ENCODE measurements at regions of chr22 and their contacts with region 1.

Region 1: DNA sequence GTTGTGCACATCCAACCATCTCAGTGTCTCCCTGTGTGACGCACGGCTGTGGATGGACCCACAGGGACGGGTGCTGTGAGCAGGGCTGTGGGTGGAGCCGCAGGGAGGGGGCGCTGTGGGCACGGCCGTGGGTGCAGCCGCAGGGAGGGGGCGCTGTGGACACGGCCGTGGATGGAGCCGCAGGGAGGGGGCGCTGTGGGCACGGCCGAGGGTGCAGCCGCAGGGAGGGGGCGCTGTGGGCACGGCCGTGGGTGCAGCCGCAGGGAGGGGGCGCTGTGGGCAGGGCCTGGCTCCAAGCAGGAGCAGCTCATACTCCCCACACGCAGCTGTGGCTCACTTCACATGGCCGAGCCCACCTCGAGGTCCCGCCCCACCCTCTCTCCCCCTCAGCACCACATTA is 6.0 kb upstream of the MAPK11 start:
- DNase-seq: peak; percentile 90 to 94 (median 93)
- H3K4me3 ChIP-seq: no peak overlapping the region
- H3K27ac ChIP-seq: no peak overlapping the region
- H3K4me1 ChIP-seq: peaks cover 0 to 16% (median 11%) of the 10 kb centered on the region in 4 experiments
- H3K27me3 ChIP-seq: peaks cover 0 to 7% (median 1%) of the 10 kb centered on the region in 5 experiments

Region 2: GRCh38 chr22:50250555-50251476 is 25.3 kb before region 1 on chr22 and contains the start of gene HDAC10:
- CTCF ChIA-PET with region 1: interaction called, 22 read pairs
- POLR2A ChIA-PET with region 1: interaction called, 5 read pairs
- DNase-seq: peak; percentile 77 to 83 (median 81)
- H3K4me3 ChIP-seq: peak within 1 kb of the TSS; percentile 38 to 90 (median 76)
- H3K27ac ChIP-seq: peak within 1 kb of the TSS in 1 of 2 experiments; percentile 49
- H3K4me1 ChIP-seq: peaks cover 0 to 37% (median 31%) of the 10 kb centered on the region in 4 experiments
- H3K27me3 ChIP-seq: no peaks in the 10 kb centered on the region

Region 3: GRCh38 chr22:50261615-50262459 is 14.3 kb before region 1 on chr22 and contains the start of gene MAPK12:
- CTCF ChIA-PET with region 1: interaction called, 10 read pairs
- POLR2A ChIA-PET with region 1: no interaction called
- DNase-seq: no peak
- H3K4me3 ChIP-seq: peak within 1 kb of the TSS; percentile 13 to 72 (median 61)
- H3K27ac ChIP-seq: no peak within 1 kb of the TSS
- H3K4me1 ChIP-seq: peaks cover 0 to 26% (median 24%) of the 10 kb centered on the region in 4 experiments
- H3K27me3 ChIP-seq: no peaks in the 10 kb centered on the region

Region 4: GRCh38 chr22:50293441-50294318 is 17.5 kb after region 1 on chr22:
- CTCF ChIA-PET with region 1: interaction called, 22 read pairs
- POLR2A ChIA-PET with region 1: no interaction called
- DNase-seq: peak; percentile 53 to 90 (median 88)
- H3K4me3 ChIP-seq: peak overlapping the region in 6 of 7 experiments; percentile 35 to 70 (median 67)
- H3K27ac ChIP-seq: peak overlapping the region; percentile 15 to 74
- H3K4me1 ChIP-seq: peaks cover 0 to 55% (median 52%) of the 10 kb centered on the region in 4 experiments
- H3K27me3 ChIP-seq: no peaks in the 10 kb centered on the region

Region 5: DNA sequence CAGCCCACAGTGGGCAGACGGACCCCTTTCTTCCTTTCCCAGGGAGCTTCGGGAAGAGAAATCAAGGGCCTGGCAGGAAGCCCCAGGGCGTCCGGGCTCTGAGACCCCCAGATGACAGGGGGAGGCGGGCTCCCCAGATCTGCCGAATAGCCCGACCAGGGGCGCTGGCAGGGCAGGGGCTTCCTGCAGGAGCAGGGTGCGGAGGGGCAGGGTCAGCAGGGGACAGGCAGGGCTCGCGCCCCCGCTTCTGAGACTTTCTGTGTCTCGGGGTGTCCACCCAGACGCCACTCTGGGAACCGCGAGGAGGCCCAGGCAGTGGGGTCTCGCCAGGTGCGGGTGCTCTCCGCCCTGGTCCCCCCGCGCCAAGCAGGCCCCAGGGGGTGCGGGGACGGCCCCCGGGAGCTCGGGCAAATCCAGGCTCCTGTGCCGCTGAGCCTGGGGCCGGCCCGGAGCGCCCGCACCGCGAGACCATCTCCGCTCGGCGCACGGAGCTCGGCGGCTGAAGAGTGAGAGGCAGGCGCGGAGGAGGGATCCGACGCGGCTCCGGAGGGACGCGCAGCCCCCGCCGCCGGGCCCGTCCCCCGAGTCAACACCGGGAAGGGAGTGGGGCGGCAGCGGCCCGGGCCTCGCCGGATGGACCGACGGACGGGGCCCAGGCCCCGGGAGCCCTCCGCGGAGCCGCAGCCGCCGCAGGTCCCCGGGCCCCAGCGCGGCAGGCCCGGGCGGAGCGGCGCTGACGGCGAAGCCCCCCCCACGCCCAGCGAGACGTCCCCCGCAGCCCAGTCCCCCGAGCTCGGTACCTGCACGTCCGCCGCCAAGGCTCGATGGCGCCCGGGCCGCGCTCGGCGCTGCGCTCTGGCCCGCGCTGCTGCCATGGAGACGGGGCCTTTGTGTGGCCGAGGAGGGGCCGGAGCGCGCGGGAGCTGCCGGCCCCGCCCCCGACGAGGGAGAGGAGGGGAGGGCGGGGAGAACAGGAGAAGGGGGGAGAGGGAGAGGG is 30.9 kb after region 1 on chr22 and contains the start of gene PLXNB2:
- CTCF ChIA-PET with region 1: interaction called, 15 read pairs
- POLR2A ChIA-PET with region 1: interaction called, 3 read pairs
- DNase-seq: peak; percentile 52 to 76 (median 71)
- H3K4me3 ChIP-seq: peak within 1 kb of the TSS; percentile 59 to 86 (median 80)
- H3K27ac ChIP-seq: peak within 1 kb of the TSS; percentile 40 to 71
- H3K4me1 ChIP-seq: peaks cover 0 to 75% (median 66%) of the 10 kb centered on the region in 4 experiments
- H3K27me3 ChIP-seq: no peaks in the 10 kb centered on the region

Region 6: DNA sequence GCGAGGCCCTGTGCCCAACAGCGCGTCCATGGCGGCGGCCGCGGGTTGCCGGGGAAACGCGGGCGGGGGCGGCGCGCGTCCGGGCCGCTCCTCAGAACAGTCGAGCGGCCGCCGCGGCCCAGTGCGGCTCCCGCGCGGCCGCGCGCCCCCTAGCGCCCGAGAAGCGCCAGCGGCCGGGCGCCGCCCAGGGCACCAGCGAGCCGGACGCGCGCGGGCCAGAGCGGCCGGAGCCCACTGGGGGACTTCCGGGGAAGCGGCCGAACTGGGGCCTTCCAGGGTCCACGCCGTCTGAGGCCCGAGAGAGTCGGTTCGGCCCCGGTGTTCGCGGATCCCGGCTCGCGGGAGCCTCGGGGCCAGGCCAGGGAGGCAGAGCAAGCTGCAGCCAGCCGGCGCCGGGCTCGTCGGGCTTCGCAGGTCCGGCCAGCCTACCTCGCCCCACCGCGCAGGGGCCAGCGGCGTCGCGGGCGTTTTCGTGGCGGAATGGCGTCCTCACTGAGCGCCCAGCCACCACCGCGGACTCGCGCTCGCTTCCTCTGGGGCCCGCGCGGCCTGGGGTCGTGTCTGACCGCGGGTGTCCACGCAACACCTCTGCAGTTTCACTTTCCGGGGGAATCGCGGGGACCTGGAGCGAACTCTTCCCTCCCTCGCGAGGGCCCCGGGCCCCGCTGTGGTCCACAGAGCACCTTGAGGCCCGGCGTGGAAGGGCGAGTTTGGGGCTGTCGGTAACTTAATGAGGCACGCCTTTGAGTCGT is 51.0 kb after region 1 on chr22 and contains the start of gene DENND6B:
- CTCF ChIA-PET with region 1: interaction called, 120 read pairs
- POLR2A ChIA-PET with region 1: no interaction called
- DNase-seq: peak; percentile 67 to 76 (median 72)
- H3K4me3 ChIP-seq: peak within 1 kb of the TSS; percentile 58 to 83 (median 71)
- H3K27ac ChIP-seq: peak within 1 kb of the TSS in 1 of 2 experiments; percentile 82
- H3K4me1 ChIP-seq: peaks cover 0 to 17% (median 15%) of the 10 kb centered on the region in 4 experiments
- H3K27me3 ChIP-seq: peaks cover 0 to 6% (median 0%) of the 10 kb centered on the region in 5 experiments